CD4-positive, alpha-beta memory T cell (primary cell): ENCODE measurements at regions of chr11 and their contacts with region 1.

Region 1: DNA sequence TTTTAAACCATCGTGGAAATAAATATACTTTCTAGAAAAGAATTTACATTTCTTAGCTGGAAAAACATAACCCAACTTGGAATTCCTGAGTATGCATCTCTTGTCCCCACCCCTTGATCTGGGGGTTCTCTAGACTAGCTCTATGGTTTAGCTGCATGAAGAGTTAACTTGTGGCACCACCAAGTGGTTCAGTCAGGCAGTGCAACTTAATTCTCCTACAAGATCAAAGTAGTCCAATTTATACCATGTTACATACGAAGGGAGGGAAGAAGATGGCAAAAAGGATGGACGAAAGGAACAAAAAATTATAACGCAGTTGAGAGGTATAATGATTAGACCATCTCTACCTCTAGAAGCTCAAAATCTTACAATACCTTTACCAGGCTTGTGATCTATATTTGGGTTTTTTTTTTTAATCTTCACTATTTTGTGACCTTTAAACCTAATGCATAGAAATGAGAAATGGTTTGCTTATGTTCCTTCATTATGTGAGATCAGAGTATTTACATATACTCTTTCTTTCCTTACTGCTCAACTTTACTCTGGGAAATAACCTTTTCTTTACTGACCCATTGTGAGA is 28.5 kb upstream of the ALKBH3 start:
- DNase-seq: peak in 4 of 5 donors; percentile 29 to 51 (median 40)
- H3K4me3 ChIP-seq: no peak overlapping the region
- H3K4me3 Mint-ChIP-seq: no peak overlapping the region
- H3K27ac ChIP-seq: no peak overlapping the region
- H3K27ac Mint-ChIP-seq: no peak overlapping the region
- H3K4me1 ChIP-seq: no peaks in the 10 kb centered on the region
- H3K4me1 Mint-ChIP-seq: peaks cover 0 to 5% (median 4%) of the 10 kb centered on the region in 4 donors
- H3K27me3 ChIP-seq: no peaks in the 10 kb centered on the region
- H3K27me3 Mint-ChIP-seq: no peaks in the 10 kb centered on the region

Region 2: DNA sequence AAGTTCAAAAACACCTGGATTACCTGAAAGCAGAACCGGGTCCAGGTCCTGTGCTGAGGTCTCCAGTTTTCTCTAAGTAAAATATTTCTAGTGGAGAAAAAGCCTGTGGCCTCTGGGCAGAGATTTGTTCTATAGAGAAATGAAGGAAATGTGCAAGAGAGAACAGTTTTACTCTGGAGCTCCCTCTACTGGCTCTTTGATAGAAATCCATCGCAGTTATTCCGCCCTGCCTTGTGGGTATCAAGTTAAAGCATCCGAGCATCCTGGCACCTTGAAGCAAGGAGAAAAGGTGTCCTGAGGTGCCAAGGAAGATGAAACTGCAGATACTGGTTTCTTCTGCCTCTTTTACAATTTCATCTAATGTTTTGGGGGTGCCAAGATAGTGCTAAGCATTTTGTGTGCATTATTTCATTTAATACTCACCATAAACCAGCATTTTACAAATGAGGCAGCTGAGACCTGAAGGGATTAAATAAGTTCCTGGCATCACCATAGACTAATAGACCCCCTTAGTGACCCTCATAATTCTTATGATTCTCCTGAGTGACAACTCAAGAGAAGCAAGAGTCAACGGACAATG is 284.7 kb before region 1 on chr11:
- CTCF ChIA-PET with region 1: no interaction called
- POLR2A ChIA-PET with region 1: no interaction called
- intact Hi-C with region 1: no loop called
- DNase-seq: peak in 2 of 5 donors; percentile 11 to 15
- H3K4me3 ChIP-seq: no peak overlapping the region
- H3K4me3 Mint-ChIP-seq: no peak overlapping the region
- H3K27ac ChIP-seq: no peak overlapping the region
- H3K27ac Mint-ChIP-seq: no peak overlapping the region
- H3K4me1 ChIP-seq: no peaks in the 10 kb centered on the region
- H3K4me1 Mint-ChIP-seq: no peaks in the 10 kb centered on the region
- H3K27me3 ChIP-seq: no peaks in the 10 kb centered on the region
- H3K27me3 Mint-ChIP-seq: peaks cover 20 to 43% of the 10 kb centered on the region in 2 donors

Region 3: DNA sequence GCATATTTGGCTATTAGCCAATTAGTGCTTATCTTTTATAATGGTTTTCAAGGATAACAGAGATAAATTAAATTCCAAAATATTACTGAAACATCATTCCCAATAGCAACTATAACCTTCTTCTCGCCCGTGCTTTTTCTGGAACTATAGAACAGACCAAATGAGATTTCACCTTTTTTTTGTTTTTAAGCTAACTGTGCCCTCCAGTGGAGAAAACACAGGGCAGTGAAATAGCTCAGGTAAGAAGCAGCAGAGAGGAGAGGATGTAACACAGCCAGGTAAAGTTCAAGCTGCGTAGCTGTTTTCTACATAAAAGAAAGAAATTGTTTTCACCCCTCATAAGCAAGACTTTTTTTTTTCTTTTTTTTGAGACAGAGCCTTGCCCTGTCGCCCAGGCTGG is 143.4 kb before region 1 on chr11:
- CTCF ChIA-PET with region 1: no interaction called
- POLR2A ChIA-PET with region 1: no interaction called
- intact Hi-C with region 1: no loop called
- DNase-seq: no peak
- H3K4me3 ChIP-seq: no peak overlapping the region
- H3K4me3 Mint-ChIP-seq: no peak overlapping the region
- H3K27ac ChIP-seq: no peak overlapping the region
- H3K27ac Mint-ChIP-seq: no peak overlapping the region
- H3K4me1 ChIP-seq: no peaks in the 10 kb centered on the region
- H3K4me1 Mint-ChIP-seq: peaks cover 0 to 5% (median 3%) of the 10 kb centered on the region in 4 donors
- H3K27me3 ChIP-seq: no peaks in the 10 kb centered on the region
- H3K27me3 Mint-ChIP-seq: no peaks in the 10 kb centered on the region

Region 4: DNA sequence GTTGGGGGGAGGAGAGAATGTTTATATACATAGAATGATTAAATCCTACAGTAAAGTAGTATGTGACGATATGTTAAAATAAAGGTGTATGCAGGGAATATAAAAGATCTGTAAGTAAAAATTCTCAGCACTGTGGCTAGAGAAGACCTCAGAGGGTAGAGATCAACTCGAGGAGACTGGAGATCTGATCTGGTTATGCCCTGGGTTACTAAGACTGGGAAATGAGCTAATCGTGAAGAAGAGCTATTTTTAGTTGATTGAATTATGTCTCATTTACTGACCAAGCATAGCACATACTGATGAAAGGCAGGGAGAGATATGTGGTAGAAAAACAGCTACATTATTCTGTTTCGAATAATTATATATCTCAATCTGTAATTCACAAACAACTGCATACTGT is 14.3 kb before region 1 on chr11:
- CTCF ChIA-PET with region 1: interaction called, 15 read pairs
- POLR2A ChIA-PET with region 1: no interaction called
- intact Hi-C with region 1: no loop called
- DNase-seq: no peak
- H3K4me3 ChIP-seq: no peak overlapping the region
- H3K4me3 Mint-ChIP-seq: no peak overlapping the region
- H3K27ac ChIP-seq: no peak overlapping the region
- H3K27ac Mint-ChIP-seq: no peak overlapping the region
- H3K4me1 ChIP-seq: no peaks in the 10 kb centered on the region
- H3K4me1 Mint-ChIP-seq: no peaks in the 10 kb centered on the region
- H3K27me3 ChIP-seq: no peaks in the 10 kb centered on the region
- H3K27me3 Mint-ChIP-seq: no peaks in the 10 kb centered on the region

Region 5: DNA sequence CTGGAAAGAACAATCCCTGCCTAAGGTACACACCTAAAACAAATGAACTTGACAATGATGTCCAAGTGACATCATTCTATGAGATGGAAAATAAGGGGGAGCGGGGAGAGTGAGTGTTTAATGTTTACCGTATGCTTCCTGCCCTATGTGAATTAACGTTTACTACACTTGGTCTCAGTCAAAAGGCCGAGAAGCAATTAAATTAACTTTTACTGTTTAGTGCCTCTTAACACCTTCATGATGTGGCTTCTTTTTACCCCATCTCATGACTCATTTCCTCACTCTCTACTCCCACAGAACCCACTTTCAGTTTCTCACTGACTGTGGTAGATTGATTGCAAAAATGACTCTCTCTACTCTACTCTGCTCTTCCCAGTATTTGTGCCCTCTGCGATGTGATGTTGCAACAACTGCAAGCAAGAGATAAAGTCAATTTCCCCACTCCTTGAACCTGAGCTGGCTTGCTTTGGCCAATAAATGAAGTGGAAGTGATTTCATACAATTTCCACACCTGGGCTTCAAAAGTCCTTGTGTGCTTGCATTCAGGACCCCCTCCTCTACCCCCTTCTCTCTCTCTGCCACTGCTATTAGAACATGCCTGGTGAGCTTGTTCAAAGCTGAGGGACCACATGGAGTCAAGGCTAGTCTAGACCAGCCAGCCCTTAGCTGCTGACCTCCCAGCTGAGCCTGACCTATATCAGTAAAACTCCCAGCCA is 16.9 kb after region 1 on chr11:
- CTCF ChIA-PET with region 1: interaction called, 14 read pairs
- POLR2A ChIA-PET with region 1: no interaction called
- intact Hi-C with region 1: no loop called
- DNase-seq: peak; percentile 48 to 62 (median 54)
- H3K4me3 ChIP-seq: no peak overlapping the region
- H3K4me3 Mint-ChIP-seq: peak overlapping the region; percentile 44 to 79 (median 66)
- H3K27ac ChIP-seq: peak overlapping the region; percentile 40
- H3K27ac Mint-ChIP-seq: peak overlapping the region; percentile 70 to 92 (median 83)
- H3K4me1 ChIP-seq: peaks cover 17% of the 10 kb centered on the region
- H3K4me1 Mint-ChIP-seq: peaks cover 11 to 23% (median 17%) of the 10 kb centered on the region in 4 donors
- H3K27me3 ChIP-seq: peaks cover 6% of the 10 kb centered on the region
- H3K27me3 Mint-ChIP-seq: peaks cover 10 to 25% of the 10 kb centered on the region in 2 donors